CD8-positive, alpha-beta T cell (primary cell): ENCODE measurements at regions of chr20 and their contacts with region 1.

Region 1: DNA sequence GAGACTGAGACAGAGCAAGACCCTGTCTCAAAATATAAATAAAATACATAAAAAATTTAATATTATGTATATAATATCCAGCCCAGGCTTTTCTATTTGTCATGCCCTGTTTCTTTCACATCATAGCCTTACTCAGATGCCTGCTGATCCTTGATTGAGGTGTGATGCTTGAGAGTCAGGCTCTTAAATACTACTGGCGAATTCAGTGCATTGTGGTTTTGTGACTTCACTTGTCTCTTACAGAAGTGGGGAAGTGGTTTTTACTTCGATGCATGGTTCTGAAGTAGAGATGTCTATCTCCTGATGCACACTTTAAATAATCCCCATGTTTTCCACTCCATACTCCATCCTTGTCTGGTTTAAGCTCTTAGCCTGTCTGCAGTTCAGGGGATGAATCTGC is 29.1 kb downstream of the ASXL1 start:
- DNase-seq: peak in 7 of 9 experiments; percentile 3 to 85 (median 36)
- ATAC-seq: peak; percentile 95
- H3K4me3 ChIP-seq: no peak overlapping the region
- H3K4me3 Mint-ChIP-seq: peak overlapping the region; percentile 3
- H3K27ac ChIP-seq: peak overlapping the region in 1 of 2 experiments; percentile 2
- H3K27ac Mint-ChIP-seq: peak overlapping the region; percentile 91
- H3K4me1 ChIP-seq: peaks cover 34% of the 10 kb centered on the region
- H3K4me1 Mint-ChIP-seq: peaks cover 65% of the 10 kb centered on the region
- H3K27me3 ChIP-seq: no peaks in the 10 kb centered on the region
- H3K27me3 Mint-ChIP-seq: no peaks in the 10 kb centered on the region
- CTCF ChIP-seq: no peak

Region 2: GRCh38 chr20:32231847-32232246 is 155.4 kb before region 1 on chr20:
- CTCF ChIA-PET with region 1: no interaction called
- POLR2A ChIA-PET with region 1: no interaction called
- intact Hi-C with region 1: no loop called
- DNase-seq: peak in 7 of 9 experiments; percentile 6 to 72 (median 42)
- ATAC-seq: peak; percentile 96
- H3K4me3 ChIP-seq: no peak overlapping the region
- H3K4me3 Mint-ChIP-seq: no peak overlapping the region
- H3K27ac ChIP-seq: peak overlapping the region in 1 of 2 experiments; percentile 59
- H3K27ac Mint-ChIP-seq: peak overlapping the region; percentile 87
- H3K4me1 ChIP-seq: peaks cover 16% of the 10 kb centered on the region
- H3K4me1 Mint-ChIP-seq: peaks cover 15% of the 10 kb centered on the region
- H3K27me3 ChIP-seq: no peaks in the 10 kb centered on the region
- H3K27me3 Mint-ChIP-seq: no peaks in the 10 kb centered on the region
- CTCF ChIP-seq: no peak

Region 3: DNA sequence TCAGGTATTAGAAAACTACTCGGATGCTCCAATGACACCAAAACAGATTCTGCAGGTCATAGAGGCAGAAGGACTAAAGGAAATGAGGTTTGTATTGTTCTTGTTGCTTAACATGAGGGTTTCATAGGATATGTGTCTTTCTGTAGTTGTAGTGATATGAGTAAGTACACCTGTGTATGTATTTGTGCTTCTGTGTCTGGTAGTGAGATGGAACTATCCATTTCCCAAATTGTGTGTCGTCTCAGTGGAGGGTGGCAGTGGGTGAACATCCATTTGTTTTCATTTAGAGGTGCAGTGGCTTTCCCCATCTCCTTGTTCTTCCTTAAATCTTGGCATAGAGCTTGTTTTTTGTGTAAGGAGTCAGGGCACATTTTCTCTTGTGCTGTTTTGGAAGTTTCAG is 20.9 kb before region 1 on chr20:
- CTCF ChIA-PET with region 1: interaction called, 3 read pairs
- POLR2A ChIA-PET with region 1: interaction called, 4 read pairs
- intact Hi-C with region 1: loop called in 1 of 2 experiments (anchors 2 kb)
- DNase-seq: no peak
- ATAC-seq: no peak
- H3K4me3 ChIP-seq: no peak overlapping the region
- H3K4me3 Mint-ChIP-seq: no peak overlapping the region
- H3K27ac ChIP-seq: no peak overlapping the region
- H3K27ac Mint-ChIP-seq: peak overlapping the region; percentile 59
- H3K4me1 ChIP-seq: peaks cover 57% of the 10 kb centered on the region
- H3K4me1 Mint-ChIP-seq: peaks cover 73% of the 10 kb centered on the region
- H3K27me3 ChIP-seq: no peaks in the 10 kb centered on the region
- H3K27me3 Mint-ChIP-seq: no peaks in the 10 kb centered on the region
- CTCF ChIP-seq: no peak

Region 4: GRCh38 chr20:32404017-32404416 is 16.8 kb after region 1 on chr20:
- CTCF ChIA-PET with region 1: no interaction called
- POLR2A ChIA-PET with region 1: no interaction called
- intact Hi-C with region 1: loop called in 1 of 2 experiments (anchors 2 kb)
- DNase-seq: no peak
- ATAC-seq: no peak
- H3K4me3 ChIP-seq: no peak overlapping the region
- H3K4me3 Mint-ChIP-seq: no peak overlapping the region
- H3K27ac ChIP-seq: no peak overlapping the region
- H3K27ac Mint-ChIP-seq: peak overlapping the region; percentile 12
- H3K4me1 ChIP-seq: peaks cover 38% of the 10 kb centered on the region
- H3K4me1 Mint-ChIP-seq: peaks cover 74% of the 10 kb centered on the region
- H3K27me3 ChIP-seq: no peaks in the 10 kb centered on the region
- H3K27me3 Mint-ChIP-seq: no peaks in the 10 kb centered on the region
- CTCF ChIP-seq: no peak

Region 5: GRCh38 chr20:32429745-32430360 is 42.6 kb after region 1 on chr20:
- CTCF ChIA-PET with region 1: no interaction called
- POLR2A ChIA-PET with region 1: no interaction called
- intact Hi-C with region 1: loop called in 1 of 2 experiments (anchors 5 kb)
- DNase-seq: no peak
- ATAC-seq: no peak
- H3K4me3 ChIP-seq: no peak overlapping the region
- H3K4me3 Mint-ChIP-seq: no peak overlapping the region
- H3K27ac ChIP-seq: no peak overlapping the region
- H3K27ac Mint-ChIP-seq: no peak overlapping the region
- H3K4me1 ChIP-seq: peaks cover 3% of the 10 kb centered on the region
- H3K4me1 Mint-ChIP-seq: peaks cover 7% of the 10 kb centered on the region
- H3K27me3 ChIP-seq: no peaks in the 10 kb centered on the region
- H3K27me3 Mint-ChIP-seq: no peaks in the 10 kb centered on the region
- CTCF ChIP-seq: no peak